ENCODE measurements at regions of chr18 and their contacts with region 1.

Region 1: DNA sequence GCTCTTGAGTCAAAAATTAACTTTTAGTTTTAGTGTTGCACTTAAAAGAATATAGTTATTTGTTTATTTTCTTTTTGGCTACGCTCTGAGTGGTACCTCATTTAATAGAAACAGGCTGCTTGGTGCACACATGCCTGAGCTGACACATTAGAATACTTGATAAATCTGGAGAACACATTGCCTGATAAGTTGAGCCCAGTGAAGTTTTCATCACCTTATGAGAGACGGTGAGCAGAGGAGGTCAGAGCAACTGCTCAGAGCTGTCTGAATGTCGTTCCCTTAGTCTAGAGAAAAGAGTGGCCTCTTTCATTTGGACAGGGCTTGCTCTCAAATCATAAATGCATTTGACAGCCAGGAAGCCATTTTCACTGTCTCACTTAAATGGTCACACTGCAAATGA is 715.9 kb downstream of the MBD2 start:
- DNase-seq: no peak
- ATAC-seq: peak; percentile 64

Region 2: GRCh38 chr18:53496028-53496427 is 12.5 kb before region 1 on chr18:
- intact Hi-C with region 1: loop called (anchors 1 kb)
- DNase-seq: no peak
- ATAC-seq: no peak

Measured in Right ventricle myocardium inferior (tissue), 1 donor.